Caco-2 (cell line): ENCODE measurements at regions of chr15 and their contacts with region 1.

Region 1: GRCh38 chr15:38707802-38708671 is 143.4 kb upstream of the RASGRP1 start:
- DNase-seq: peak in 1 of 2 experiments; percentile 62
- H3K4me3 ChIP-seq: no peak overlapping the region
- H3K4me3 Mint-ChIP-seq: no peak overlapping the region
- H3K27ac Mint-ChIP-seq: no peak overlapping the region
- H3K4me1 ChIP-seq: peaks cover 1% of the 10 kb centered on the region; the same call in 1 of the 2 replicates
- H3K4me1 Mint-ChIP-seq: no peaks in the 10 kb centered on the region
- H3K27me3 ChIP-seq: no peaks in the 10 kb centered on the region
- H3K27me3 Mint-ChIP-seq: no peaks in the 10 kb centered on the region
- CTCF ChIP-seq: peak; percentile 68 to 70

Region 2: DNA sequence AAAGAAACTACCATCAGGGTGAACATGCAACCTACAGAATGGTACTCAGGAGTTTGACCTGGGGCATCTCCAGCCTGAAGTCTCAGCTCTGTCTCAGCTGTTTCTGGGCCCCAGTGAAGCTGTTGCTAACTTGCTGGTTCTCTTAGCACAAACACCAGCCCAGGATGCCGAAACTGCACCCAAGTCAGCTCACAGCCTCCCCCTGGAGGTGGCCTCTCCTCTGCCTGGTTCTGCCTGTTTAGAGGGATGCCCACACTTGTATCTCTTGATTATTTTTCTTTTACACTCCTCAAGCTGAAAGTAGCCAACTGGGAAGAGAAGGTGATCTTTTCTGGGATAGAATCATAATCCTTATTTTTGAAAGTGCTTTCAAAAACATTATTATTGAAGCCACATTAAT is 145.6 kb after region 1 on chr15:
- CTCF ChIA-PET with region 1: interaction called, 6 read pairs
- POLR2A ChIA-PET with region 1: no interaction called
- intact Hi-C with region 1: loop called (anchors 1 kb)
- DNase-seq: peak; percentile 51 to 65
- H3K4me3 ChIP-seq: no peak overlapping the region
- H3K4me3 Mint-ChIP-seq: no peak overlapping the region
- H3K27ac Mint-ChIP-seq: no peak overlapping the region
- H3K4me1 ChIP-seq: no peaks in the 10 kb centered on the region
- H3K4me1 Mint-ChIP-seq: no peaks in the 10 kb centered on the region
- H3K27me3 ChIP-seq: no peaks in the 10 kb centered on the region
- H3K27me3 Mint-ChIP-seq: no peaks in the 10 kb centered on the region
- CTCF ChIP-seq: peak; percentile 43 to 66

Region 3: GRCh38 chr15:38991126-38991525 is 283.1 kb after region 1 on chr15:
- CTCF ChIA-PET with region 1: interaction called, 5 read pairs
- POLR2A ChIA-PET with region 1: no interaction called
- intact Hi-C with region 1: loop called (anchors 5 kb)
- DNase-seq: peak in 1 of 2 experiments; percentile 29
- H3K4me3 ChIP-seq: no peak overlapping the region
- H3K4me3 Mint-ChIP-seq: no peak overlapping the region
- H3K27ac Mint-ChIP-seq: no peak overlapping the region
- H3K4me1 ChIP-seq: no peaks in the 10 kb centered on the region
- H3K4me1 Mint-ChIP-seq: peaks cover 6% of the 10 kb centered on the region
- H3K27me3 ChIP-seq: no peaks in the 10 kb centered on the region
- H3K27me3 Mint-ChIP-seq: no peaks in the 10 kb centered on the region
- CTCF ChIP-seq: peak; percentile 16 to 40

Region 4: GRCh38 chr15:39079296-39079834 is 371.3 kb after region 1 on chr15:
- CTCF ChIA-PET with region 1: no interaction called
- POLR2A ChIA-PET with region 1: no interaction called
- intact Hi-C with region 1: no loop called
- DNase-seq: no peak
- H3K4me3 ChIP-seq: no peak overlapping the region
- H3K4me3 Mint-ChIP-seq: no peak overlapping the region
- H3K27ac Mint-ChIP-seq: no peak overlapping the region
- H3K4me1 ChIP-seq: no peaks in the 10 kb centered on the region
- H3K4me1 Mint-ChIP-seq: no peaks in the 10 kb centered on the region
- H3K27me3 ChIP-seq: no peaks in the 10 kb centered on the region
- H3K27me3 Mint-ChIP-seq: no peaks in the 10 kb centered on the region
- CTCF ChIP-seq: no peak